Endothelial cell of umbilical vein (primary cell): ENCODE measurements at regions of chr4 and their contacts with region 1.

Region 1: GRCh38 chr4:169810325-169811323 is 52.9 kb upstream of the HPF1 start:
- DNase-seq: peak; percentile 68
- H3K4me3 ChIP-seq: no peak overlapping the region
- H3K27ac ChIP-seq: no peak overlapping the region
- H3K4me1 ChIP-seq: no peaks in the 10 kb centered on the region
- H3K27me3 ChIP-seq: peaks cover 3 to 5% of the 10 kb centered on the region in 2 experiments
- CTCF ChIP-seq: peak; percentile 56 to 62
- POLR2A ChIP-seq: no peak

Region 2: GRCh38 chr4:169791527-169792156 is 19.0 kb before region 1 on chr4:
- CTCF ChIA-PET with region 1: interaction called, 14 read pairs
- POLR2A ChIA-PET with region 1: no interaction called
- dilution Hi-C with region 1: no loop called
- intact Hi-C with region 1: no loop called
- DNase-seq: peak; percentile 64
- H3K4me3 ChIP-seq: no peak overlapping the region
- H3K27ac ChIP-seq: no peak overlapping the region
- H3K4me1 ChIP-seq: no peaks in the 10 kb centered on the region
- H3K27me3 ChIP-seq: peaks cover 4 to 6% of the 10 kb centered on the region in 2 experiments
- CTCF ChIP-seq: peak; percentile 40 to 41
- POLR2A ChIP-seq: no peak

Region 3: GRCh38 chr4:169800541-169800940 is 10.1 kb before region 1 on chr4:
- CTCF ChIA-PET with region 1: interaction called, 16 read pairs
- POLR2A ChIA-PET with region 1: no interaction called
- dilution Hi-C with region 1: no loop called
- intact Hi-C with region 1: no loop called
- DNase-seq: no peak
- H3K4me3 ChIP-seq: no peak overlapping the region
- H3K27ac ChIP-seq: no peak overlapping the region
- H3K4me1 ChIP-seq: no peaks in the 10 kb centered on the region
- H3K27me3 ChIP-seq: peaks cover 0 to 4% of the 10 kb centered on the region in 2 experiments
- CTCF ChIP-seq: no peak
- POLR2A ChIP-seq: no peak

Region 4: GRCh38 chr4:169823685-169824084 is 13.1 kb after region 1 on chr4:
- CTCF ChIA-PET with region 1: interaction called, 29 read pairs
- POLR2A ChIA-PET with region 1: no interaction called
- dilution Hi-C with region 1: no loop called
- intact Hi-C with region 1: no loop called
- DNase-seq: peak; percentile 51
- H3K4me3 ChIP-seq: no peak overlapping the region
- H3K27ac ChIP-seq: no peak overlapping the region
- H3K4me1 ChIP-seq: no peaks in the 10 kb centered on the region
- H3K27me3 ChIP-seq: peaks cover 0 to 2% of the 10 kb centered on the region in 2 experiments
- CTCF ChIP-seq: no peak
- POLR2A ChIP-seq: no peak

Region 5: GRCh38 chr4:170047771-170048354 is 237.2 kb after region 1 on chr4:
- CTCF ChIA-PET with region 1: interaction called, 107 read pairs
- POLR2A ChIA-PET with region 1: no interaction called
- dilution Hi-C with region 1: no loop called
- intact Hi-C with region 1: loop called (anchors 1 kb)
- DNase-seq: peak; percentile 65
- H3K4me3 ChIP-seq: no peak overlapping the region
- H3K27ac ChIP-seq: no peak overlapping the region
- H3K4me1 ChIP-seq: no peaks in the 10 kb centered on the region
- H3K27me3 ChIP-seq: peaks cover 0 to 1% of the 10 kb centered on the region in 2 experiments
- CTCF ChIP-seq: peak; percentile 51 to 59
- POLR2A ChIP-seq: no peak

Region 6: DNA sequence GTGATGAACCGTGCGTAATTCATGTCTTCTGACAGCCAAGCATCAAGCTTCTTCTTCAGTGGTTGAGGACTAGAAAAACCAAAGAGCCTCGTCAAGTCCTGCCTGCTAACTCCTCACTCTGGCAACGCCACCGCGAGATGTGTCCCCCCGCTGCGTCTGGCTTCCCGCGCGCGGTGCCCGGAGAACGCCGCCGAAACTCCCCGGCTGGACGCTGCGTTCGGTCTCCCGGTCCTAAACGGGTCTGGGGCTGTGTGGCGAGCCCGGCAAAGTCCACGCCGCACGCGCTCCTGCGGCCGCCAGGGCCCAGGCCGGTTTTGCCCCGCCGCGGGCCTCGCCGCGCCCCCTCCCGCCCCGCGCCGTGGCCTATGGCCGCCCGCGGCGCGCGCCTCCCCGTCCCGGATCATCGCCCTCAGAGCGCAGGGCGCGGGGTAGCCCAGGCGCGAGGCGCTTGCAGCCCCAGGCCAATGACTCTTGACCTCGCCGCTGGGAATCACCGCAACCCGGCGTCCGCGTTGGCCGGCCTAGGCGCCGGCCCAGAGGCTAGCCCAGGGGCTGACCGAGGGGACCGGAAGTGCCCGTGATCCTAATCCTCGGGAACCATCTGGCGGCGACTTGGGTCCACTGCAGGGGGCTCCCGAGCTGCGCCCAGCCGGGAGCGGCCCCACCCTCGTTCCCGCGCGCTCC is 279.2 kb after region 1 on chr4 and contains the start of gene AADAT:
- CTCF ChIA-PET with region 1: interaction called, 19 read pairs
- POLR2A ChIA-PET with region 1: no interaction called
- dilution Hi-C with region 1: no loop called
- intact Hi-C with region 1: loop called (anchors 1 kb)
- DNase-seq: peak; percentile 44
- H3K4me3 ChIP-seq: peak within 1 kb of the TSS; percentile 3 to 68 (median 44)
- H3K27ac ChIP-seq: no peak within 1 kb of the TSS
- H3K4me1 ChIP-seq: peaks cover 3% of the 10 kb centered on the region
- H3K27me3 ChIP-seq: no peaks in the 10 kb centered on the region
- CTCF ChIP-seq: peak; percentile 68 to 78
- POLR2A ChIP-seq: no peak
- total RNA-seq, gene AADAT: 2.5 and 3.1 TPM in 2 replicates